ENCODE measurements at regions of chr10 and their contacts with region 1.

Region 1: GRCh38 chr10:6202684-6203330 is at the start of gene PFKFB3:
- DNase-seq: peak; percentile 93 to 95
- ATAC-seq: peak; percentile 86
- total RNA-seq, gene PFKFB3: 19.1 to 20.2 TPM

Region 2: DNA sequence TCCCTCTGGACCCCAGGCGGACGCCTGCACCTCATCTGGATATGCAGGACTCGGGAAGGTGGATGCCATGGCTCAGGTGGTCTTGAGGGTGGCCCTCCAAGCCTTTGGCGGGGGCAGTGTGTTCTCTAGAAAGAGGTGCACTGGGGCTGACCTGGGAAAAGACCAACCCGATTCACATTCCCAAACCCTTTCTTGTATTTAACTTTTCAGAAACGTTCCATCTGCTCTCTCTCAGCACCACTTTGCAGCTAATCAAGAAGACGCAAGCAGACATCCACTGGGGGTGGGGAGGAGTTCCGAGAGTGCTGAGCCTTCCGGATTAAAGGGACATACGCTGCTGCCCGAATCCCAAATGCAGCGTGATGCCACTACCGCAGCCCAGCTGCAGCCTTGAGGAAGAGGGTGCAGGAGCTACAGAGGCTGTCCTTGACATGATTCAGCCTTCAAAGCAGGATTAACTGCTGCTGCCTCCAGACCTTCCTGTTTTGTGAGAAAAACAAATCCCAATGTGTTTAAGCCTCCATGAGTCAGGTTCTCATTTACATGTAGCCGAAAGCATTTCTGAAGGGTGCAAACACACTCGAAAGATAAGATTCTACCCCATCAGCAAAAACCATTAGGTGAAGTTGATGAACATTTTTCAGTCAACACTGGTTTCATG is 74.1 kb before region 1 on chr10:
- intact Hi-C with region 1: loop called in 1 of 2 experiments (anchors 10 kb)
- DNase-seq: peak in 1 of 2 donors; percentile 27
- ATAC-seq: no peak